ENCODE measurements at regions of chr1 and their contacts with region 1.

Region 1: GRCh38 chr1:150561974-150562445 is 12.8 kb downstream of the ADAMTSL4 start:
- DNase-seq: peak; percentile 92
- ATAC-seq: peak; percentile 60
- H3K4me3 Mint-ChIP-seq: peak overlapping the region; percentile 90
- H3K27ac Mint-ChIP-seq: peak overlapping the region; percentile 99
- H3K4me1 Mint-ChIP-seq: peaks cover 67% of the 10 kb centered on the region
- H3K27me3 Mint-ChIP-seq: no peaks in the 10 kb centered on the region

Region 2: GRCh38 chr1:150256554-150257341 is 305.3 kb before region 1 on chr1:
- CTCF ChIA-PET with region 1: interaction called, 10 read pairs
- POLR2A ChIA-PET with region 1: interaction called, 3 read pairs
- DNase-seq: no peak
- ATAC-seq: no peak
- H3K4me3 Mint-ChIP-seq: no peak overlapping the region
- H3K27ac Mint-ChIP-seq: no peak overlapping the region
- H3K4me1 Mint-ChIP-seq: peaks cover 24% of the 10 kb centered on the region
- H3K27me3 Mint-ChIP-seq: peaks cover 48% of the 10 kb centered on the region

Region 3: DNA sequence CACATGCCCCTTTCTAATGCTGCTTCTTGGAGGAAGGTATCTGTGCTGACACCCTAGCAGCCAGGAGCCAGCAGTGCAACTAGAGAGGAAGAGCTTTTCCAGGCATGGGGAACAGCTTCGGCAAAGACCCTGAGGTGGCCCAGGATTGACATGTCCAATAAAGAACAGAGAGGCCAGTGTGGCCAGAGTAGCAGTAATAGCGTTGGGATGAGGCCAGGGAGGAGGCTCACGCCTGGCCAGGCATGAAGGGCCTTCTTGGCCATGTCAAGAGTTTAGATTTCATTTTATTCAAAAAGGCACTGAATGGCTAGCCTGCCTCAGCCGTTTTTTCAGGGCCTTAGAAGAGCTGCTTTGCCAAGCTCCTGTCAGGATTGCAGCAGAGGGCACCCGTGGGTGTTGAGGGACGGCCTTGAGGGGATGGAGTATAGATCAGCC is 29.1 kb before region 1 on chr1:
- CTCF ChIA-PET with region 1: interaction called, 12 read pairs
- POLR2A ChIA-PET with region 1: no interaction called
- DNase-seq: no peak
- ATAC-seq: no peak
- H3K4me3 Mint-ChIP-seq: no peak overlapping the region
- H3K27ac Mint-ChIP-seq: peak overlapping the region; percentile 19
- H3K4me1 Mint-ChIP-seq: peaks cover 5% of the 10 kb centered on the region
- H3K27me3 Mint-ChIP-seq: no peaks in the 10 kb centered on the region

Region 4: GRCh38 chr1:150578965-150579798 is 17.2 kb after region 1 on chr1 and contains the start of gene MCL1:
- CTCF ChIA-PET with region 1: interaction called, 412 read pairs
- POLR2A ChIA-PET with region 1: interaction called, 1,108 read pairs
- DNase-seq: peak; percentile 94
- ATAC-seq: peak; percentile 75
- H3K4me3 Mint-ChIP-seq: peak within 1 kb of the TSS; percentile 97
- H3K27ac Mint-ChIP-seq: peak within 1 kb of the TSS; percentile 98
- H3K4me1 Mint-ChIP-seq: peaks cover 39% of the 10 kb centered on the region
- H3K27me3 Mint-ChIP-seq: no peaks in the 10 kb centered on the region
- total RNA-seq, gene MCL1: 249 to 261 TPM

Region 5: GRCh38 chr1:150613061-150613920 is 51.3 kb after region 1 on chr1:
- CTCF ChIA-PET with region 1: interaction called, 386 read pairs
- POLR2A ChIA-PET with region 1: interaction called, 169 read pairs
- DNase-seq: peak; percentile 54
- ATAC-seq: peak; percentile 38
- H3K4me3 Mint-ChIP-seq: peak overlapping the region; percentile 30
- H3K27ac Mint-ChIP-seq: peak overlapping the region; percentile 83
- H3K4me1 Mint-ChIP-seq: peaks cover 61% of the 10 kb centered on the region
- H3K27me3 Mint-ChIP-seq: no peaks in the 10 kb centered on the region

Region 6: GRCh38 chr1:150629115-150629928 is 67.3 kb after region 1 on chr1 and contains the start of gene ENSA:
- CTCF ChIA-PET with region 1: interaction called, 386 read pairs
- POLR2A ChIA-PET with region 1: interaction called, 73 read pairs
- DNase-seq: peak; percentile 98
- ATAC-seq: peak; percentile 91
- H3K4me3 Mint-ChIP-seq: no peak within 1 kb of the TSS
- H3K27ac Mint-ChIP-seq: no peak within 1 kb of the TSS
- H3K4me1 Mint-ChIP-seq: peaks cover 19% of the 10 kb centered on the region
- H3K27me3 Mint-ChIP-seq: no peaks in the 10 kb centered on the region
- total RNA-seq, gene ENSA: 208 to 214 TPM

Measured in activated CD8-positive, alpha-beta T cell treated with anti-CD3 and anti-CD28 coated beads, Interleukin-2, amount 10 ng/mL, durations not matched to agents 7 days and 5 days (primary cell).